H1 (cell line): ENCODE measurements at regions of chr16 and their contacts with region 1.

Region 1: DNA sequence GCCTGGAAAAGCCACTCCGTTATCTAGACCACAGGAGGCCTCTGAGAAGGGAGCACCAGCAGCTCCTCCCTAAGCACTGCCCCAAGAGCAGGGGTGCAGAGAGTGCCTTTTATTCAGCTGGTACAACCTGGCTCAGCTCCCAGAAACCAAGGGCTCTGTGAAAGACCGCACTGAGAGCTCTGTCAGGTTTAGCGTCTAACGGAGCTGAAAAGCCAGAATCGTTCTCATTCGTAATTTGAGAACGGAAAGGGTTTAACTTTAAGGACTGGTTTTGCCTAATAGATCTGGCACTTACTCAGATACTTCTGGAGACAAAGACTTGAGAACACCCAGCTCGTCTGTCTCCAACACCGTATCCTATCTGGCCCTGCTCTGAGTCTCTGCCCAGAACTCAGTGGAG is 13.5 kb downstream of the MPG start:
- DNase-seq: no peak
- H3K4me3 ChIP-seq: no peak overlapping the region
- H3K27ac ChIP-seq: no peak overlapping the region
- H3K4me1 ChIP-seq: no peaks in the 10 kb centered on the region
- H3K27me3 ChIP-seq: no peaks in the 10 kb centered on the region
- CTCF ChIP-seq: no peak
- EP300 ChIP-seq: no peak
- POLR2A ChIP-seq: no peak
- RAD21 ChIP-seq: no peak

Region 2: GRCh38 chr16:77807-78443 is 13.6 kb before region 1 on chr16 and contains the start of gene MPG:
- CTCF ChIA-PET with region 1: interaction called, 856 read pairs
- POLR2A ChIA-PET with region 1: interaction called, 153 read pairs
- DNase-seq: peak in 1 of 2 experiments; percentile 87
- H3K4me3 ChIP-seq: peak within 1 kb of the TSS; percentile 54 to 78 (median 68)
- H3K27ac ChIP-seq: no peak within 1 kb of the TSS
- H3K4me1 ChIP-seq: peaks cover 6 to 60% (median 41%) of the 10 kb centered on the region in 4 experiments
- H3K27me3 ChIP-seq: peaks cover 0 to 4% (median 3%) of the 10 kb centered on the region in 4 experiments; a peak in 3 of 7 replicates
- CTCF ChIP-seq: no peak
- EP300 ChIP-seq: no peak
- POLR2A ChIP-seq: no peak; a peak in 1 of 3 replicates
- RAD21 ChIP-seq: no peak
- total RNA-seq, gene MPG: 35.8 and 37.6 TPM in 2 replicates

Region 3: GRCh38 chr16:410516-411178 is 319.2 kb after region 1 on chr16:
- CTCF ChIA-PET with region 1: no interaction called
- POLR2A ChIA-PET with region 1: no interaction called
- DNase-seq: no peak
- H3K4me3 ChIP-seq: no peak overlapping the region
- H3K27ac ChIP-seq: no peak overlapping the region
- H3K4me1 ChIP-seq: no peaks in the 10 kb centered on the region
- H3K27me3 ChIP-seq: no peaks in the 10 kb centered on the region
- CTCF ChIP-seq: no peak
- EP300 ChIP-seq: no peak
- POLR2A ChIP-seq: no peak
- RAD21 ChIP-seq: no peak